WTC11 (cell line): ENCODE measurements at regions of chr12 and their contacts with region 1.

Region 1: DNA sequence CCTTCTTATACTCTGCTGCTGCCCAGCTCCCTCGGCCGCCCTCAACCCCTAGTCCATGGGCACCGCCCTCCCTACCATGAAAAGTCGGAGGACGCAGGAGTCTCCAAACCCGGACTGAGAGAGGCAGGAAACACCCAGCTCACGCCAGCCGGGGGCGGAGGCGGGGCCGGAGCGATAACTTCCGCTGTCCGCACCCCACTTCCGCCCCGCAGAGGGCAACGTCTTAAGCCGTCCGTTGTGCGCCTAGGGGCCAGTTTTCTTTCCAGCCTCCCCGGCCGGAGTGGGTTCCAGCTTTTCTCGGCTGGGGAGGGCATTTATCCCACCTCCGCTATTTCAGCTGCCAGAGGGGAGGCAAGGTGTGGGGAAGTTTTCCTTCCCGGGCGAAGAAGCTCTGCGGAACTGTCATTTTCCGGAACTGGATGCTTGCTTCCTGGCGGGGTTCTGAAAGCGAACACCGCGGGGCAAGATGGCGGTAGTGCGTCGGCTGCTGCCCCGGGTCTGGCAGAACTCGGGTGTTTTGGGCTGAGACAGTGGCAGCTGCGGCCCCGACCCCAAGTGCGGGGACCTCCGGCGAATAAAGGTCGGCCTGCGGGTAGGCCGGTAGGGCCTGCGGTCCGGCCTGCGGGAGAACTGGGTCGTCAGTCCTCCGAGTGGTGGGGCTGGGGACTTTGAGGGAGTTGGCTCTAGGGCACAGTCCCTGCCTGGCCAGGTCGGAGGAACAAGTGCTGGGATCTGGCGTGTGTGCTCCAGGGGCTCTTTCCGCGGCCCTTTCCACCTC is at the starts of genes KCTD10 and UBE3B:
- DNase-seq: peak; percentile 89
- ATAC-seq: peak; percentile 88
- H3K4me3 Mint-ChIP-seq: peak within 1 kb of the TSS; percentile 94
- H3K27ac Mint-ChIP-seq: peak within 1 kb of the TSS; percentile 99
- H3K4me1 Mint-ChIP-seq: peaks cover 30% of the 10 kb centered on the region
- H3K27me3 Mint-ChIP-seq: no peaks in the 10 kb centered on the region
- CTCF ChIP-seq: no peak
- total RNA-seq, gene KCTD10: 35.1 to 44.7 TPM (median 37.6 TPM) in 3 replicates
- total RNA-seq, gene UBE3B: 28.9 to 32.2 TPM (median 29.3 TPM) in 3 replicates

Region 2: DNA sequence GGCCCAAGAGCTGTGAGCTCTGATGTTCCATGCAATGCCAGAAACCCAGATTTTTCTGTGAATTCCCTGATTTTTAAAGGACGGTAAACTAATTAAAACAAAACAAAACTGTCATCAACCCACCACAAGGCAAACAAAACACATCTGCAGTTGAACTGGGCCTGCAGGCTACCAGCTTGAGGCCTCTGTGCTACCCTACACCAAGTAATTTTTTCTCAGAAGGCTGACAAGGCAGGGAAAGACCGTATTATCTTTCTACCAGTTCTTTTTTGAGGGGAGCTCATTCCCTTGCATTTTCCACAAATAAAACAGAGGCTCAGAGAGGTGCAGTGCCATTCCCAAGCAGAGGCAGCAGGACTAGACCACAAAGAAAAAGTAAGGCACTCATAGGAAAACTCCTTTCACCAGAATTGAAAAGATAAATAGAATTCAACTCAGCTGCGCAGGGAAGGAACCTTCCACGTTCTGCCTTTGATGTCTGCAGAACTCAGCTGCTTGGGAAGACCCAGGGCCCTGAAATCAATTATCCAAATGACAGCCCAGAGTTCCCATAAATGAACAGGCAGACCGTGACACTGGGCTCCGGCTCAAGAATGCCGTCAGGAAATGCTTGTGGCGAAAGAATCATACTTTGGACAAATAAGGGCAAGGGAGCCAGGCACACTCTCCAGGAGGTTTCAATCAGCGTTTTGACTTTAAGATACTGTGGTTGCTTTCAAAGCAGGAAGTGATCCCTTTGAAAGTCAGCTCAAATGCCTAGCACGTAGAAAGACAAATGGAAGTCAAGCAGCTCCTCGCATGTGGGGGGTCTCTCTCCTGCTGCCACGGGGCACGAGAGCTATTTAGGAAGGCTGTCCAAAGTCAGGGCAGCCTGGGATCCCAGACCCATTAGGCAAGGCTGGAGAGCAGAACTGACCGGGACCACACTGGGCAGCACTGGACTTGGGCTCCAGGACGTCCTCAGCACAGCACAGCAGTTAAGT is 14.4 kb before region 1 on chr12:
- CTCF ChIA-PET with region 1: interaction called, 8 read pairs
- POLR2A ChIA-PET with region 1: interaction called, 14 read pairs
- DNase-seq: peak; percentile 31
- ATAC-seq: peak; percentile 6; the same call in 1 of the 2 replicates
- H3K4me3 Mint-ChIP-seq: peak overlapping the region; percentile 39
- H3K27ac Mint-ChIP-seq: peak overlapping the region; percentile 99
- H3K4me1 Mint-ChIP-seq: peaks cover 88% of the 10 kb centered on the region
- H3K27me3 Mint-ChIP-seq: no peaks in the 10 kb centered on the region
- CTCF ChIP-seq: no peak